Right cardiac atrium (tissue), 5 donors: ENCODE measurements at regions of chr2 and their contacts with region 1.

Region 1: DNA sequence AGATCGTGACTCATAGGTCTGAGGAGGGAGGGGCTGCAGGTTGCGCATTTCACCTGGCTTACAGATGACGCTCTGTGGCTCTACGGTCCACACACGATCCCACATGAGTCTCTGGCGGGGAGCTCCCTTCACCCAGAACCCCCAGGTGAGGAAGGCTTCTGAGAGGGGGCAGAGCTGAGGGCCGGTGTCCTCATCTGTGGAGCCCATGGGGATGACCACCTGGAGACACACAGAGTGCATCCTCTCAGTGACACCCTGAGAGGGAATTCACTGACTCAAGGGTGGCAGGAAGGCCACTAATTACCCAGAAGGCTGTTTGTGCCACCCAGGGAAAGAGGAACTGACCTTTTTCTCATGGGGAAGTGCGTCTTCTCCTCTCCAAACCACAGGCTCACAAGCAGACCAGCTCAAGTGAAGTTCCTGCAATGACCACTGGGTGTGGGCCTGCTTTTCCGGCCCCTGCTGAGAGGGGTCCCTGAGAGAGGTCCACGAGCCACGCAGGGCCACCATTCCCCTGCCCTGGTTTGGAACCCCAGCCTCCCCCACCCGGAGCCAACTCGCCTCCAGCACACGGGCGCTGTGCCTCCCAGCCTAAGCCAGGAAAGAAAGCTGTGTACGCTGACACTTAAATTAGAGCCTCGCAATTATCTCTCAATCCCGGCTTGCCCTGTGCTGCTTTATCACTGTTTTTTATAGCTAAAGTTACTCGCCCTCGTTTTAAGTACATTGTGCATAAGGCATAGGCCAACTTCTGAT is 114.1 kb downstream of the BCL11A start:
- DNase-seq: peak; percentile 27 to 83 (median 79)
- ATAC-seq: peak; percentile 81 to 82
- H3K4me3 ChIP-seq: peak overlapping the region; percentile 23
- H3K27ac ChIP-seq: peak overlapping the region; percentile 74
- H3K4me1 ChIP-seq: no peaks in the 10 kb centered on the region
- H3K27me3 ChIP-seq: no peaks in the 10 kb centered on the region

Region 2: GRCh38 chr2:60530660-60531281 is 91.4 kb after region 1 on chr2:
- intact Hi-C with region 1: loop called in 1 of 4 experiments (anchors 10 kb)
- DNase-seq: peak; percentile 44 to 82 (median 69)
- ATAC-seq: peak in 1 of 2 donors; percentile 53
- H3K4me3 ChIP-seq: no peak overlapping the region
- H3K27ac ChIP-seq: no peak overlapping the region
- H3K4me1 ChIP-seq: no peaks in the 10 kb centered on the region
- H3K27me3 ChIP-seq: no peaks in the 10 kb centered on the region